Activated naive CD8-positive, alpha-beta T cell treated with anti-CD3 and anti-CD28 coated beads, Interleukin-2, amount 10 ng/mL, durations not matched to agents 7 days and 5 days (primary cell): ENCODE measurements at regions of chr12 and their contacts with region 1.

Region 1: DNA sequence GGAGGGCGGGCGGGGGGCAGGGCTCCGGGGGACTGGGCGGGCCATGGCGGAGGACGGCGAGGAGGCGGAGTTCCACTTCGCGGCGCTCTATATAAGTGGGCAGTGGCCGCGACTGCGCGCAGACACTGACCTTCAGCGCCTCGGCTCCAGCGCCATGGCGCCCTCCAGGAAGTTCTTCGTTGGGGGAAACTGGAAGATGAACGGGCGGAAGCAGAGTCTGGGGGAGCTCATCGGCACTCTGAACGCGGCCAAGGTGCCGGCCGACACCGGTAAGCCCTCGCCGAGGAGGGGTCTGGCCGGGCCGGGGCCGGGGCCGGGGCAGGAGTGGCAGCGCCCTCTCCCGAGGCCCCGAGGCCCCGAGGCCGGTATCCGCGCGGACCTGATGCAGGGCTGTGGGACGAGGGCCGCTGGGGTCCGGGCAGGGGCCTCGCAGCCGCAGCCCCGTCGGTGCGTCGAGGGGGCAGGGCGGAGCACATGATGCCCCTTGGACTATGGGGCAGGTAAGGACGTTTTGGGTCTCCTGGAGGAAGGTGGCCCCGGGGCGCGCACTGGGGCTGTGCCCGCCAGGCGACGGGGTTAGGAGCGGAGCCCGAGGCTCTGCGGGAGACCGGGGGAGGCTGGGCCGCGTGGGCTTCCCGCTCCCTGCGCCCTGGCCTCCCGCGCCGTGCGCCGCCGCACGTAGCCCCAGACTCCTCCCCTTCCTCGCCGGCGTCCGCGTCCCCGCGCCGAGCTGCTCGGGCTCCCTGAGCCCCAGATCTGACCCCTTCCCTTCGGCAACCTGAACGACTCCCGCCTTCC is at the start of gene TPI1:
- DNase-seq: peak; percentile 85
- ATAC-seq: peak; percentile 65
- H3K4me3 Mint-ChIP-seq: peak within 1 kb of the TSS; percentile 95
- H3K27ac Mint-ChIP-seq: peak within 1 kb of the TSS; percentile 96
- H3K4me1 Mint-ChIP-seq: peaks cover 39% of the 10 kb centered on the region
- H3K27me3 Mint-ChIP-seq: no peaks in the 10 kb centered on the region
- total RNA-seq, gene TPI1: 1,129 to 1,200 TPM

Region 2: DNA sequence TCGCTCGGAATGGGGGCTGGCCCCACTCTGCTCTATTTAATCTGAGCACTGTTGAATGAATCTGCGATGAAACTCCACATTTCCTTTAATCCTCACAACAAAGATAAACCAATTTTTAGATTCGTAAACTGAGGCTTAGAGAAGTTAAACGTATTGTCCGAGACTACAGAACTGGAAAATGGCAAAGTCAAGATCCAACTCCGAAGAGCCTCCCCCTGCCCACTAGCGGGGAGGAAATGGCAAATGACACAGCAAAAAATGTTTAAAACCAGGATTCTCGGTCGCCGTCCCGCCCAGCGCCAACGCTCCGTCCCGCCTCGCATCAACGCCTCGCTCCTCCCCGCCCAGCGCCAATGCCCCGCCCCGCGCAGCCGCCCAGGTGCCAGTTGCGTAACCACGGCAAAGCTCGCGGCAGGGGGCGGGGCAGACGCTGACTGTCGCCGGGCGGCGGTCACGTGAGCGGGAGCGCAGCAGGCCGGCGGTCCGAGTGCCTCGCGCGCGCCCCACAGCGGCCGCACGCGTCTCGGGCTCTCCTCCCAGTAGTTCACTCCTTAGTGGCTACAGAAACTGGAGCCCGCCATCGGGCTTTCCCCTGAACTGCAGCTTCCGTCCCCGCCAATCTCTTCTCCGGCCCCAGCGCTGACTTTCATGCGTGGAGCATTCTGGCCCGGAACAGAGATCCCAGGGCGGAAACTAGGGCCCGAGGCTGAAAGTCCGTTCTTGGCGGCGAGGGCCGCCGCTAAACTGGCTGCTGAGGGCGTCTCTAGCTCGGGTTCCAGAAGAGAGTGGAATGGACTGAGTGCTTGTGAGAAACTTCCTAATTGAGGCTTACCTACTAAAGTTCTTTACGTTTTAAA is 23.4 kb after region 1 on chr12:
- POLR2A ChIA-PET with region 1: interaction called, 78 read pairs
- DNase-seq: peak; percentile 100
- ATAC-seq: peak; percentile 97
- H3K4me3 Mint-ChIP-seq: peak overlapping the region; percentile 88
- H3K27ac Mint-ChIP-seq: peak overlapping the region; percentile 91
- H3K4me1 Mint-ChIP-seq: peaks cover 17% of the 10 kb centered on the region
- H3K27me3 Mint-ChIP-seq: no peaks in the 10 kb centered on the region

Region 3: GRCh38 chr12:6927379-6928024 is 59.9 kb after region 1 on chr12 and contains the start of gene ATN1:
- POLR2A ChIA-PET with region 1: interaction called, 10 read pairs
- DNase-seq: peak; percentile 68
- ATAC-seq: peak; percentile 23
- H3K4me3 Mint-ChIP-seq: peak within 1 kb of the TSS; percentile 82
- H3K27ac Mint-ChIP-seq: peak within 1 kb of the TSS; percentile 80
- H3K4me1 Mint-ChIP-seq: peaks cover 47% of the 10 kb centered on the region
- H3K27me3 Mint-ChIP-seq: no peaks in the 10 kb centered on the region
- total RNA-seq, gene ATN1: 31.0 to 31.3 TPM

Region 4: GRCh38 chr12:6953442-6954315 is 86.1 kb after region 1 on chr12:
- POLR2A ChIA-PET with region 1: interaction called, 25 read pairs
- DNase-seq: peak; percentile 78
- ATAC-seq: peak; percentile 23
- H3K4me3 Mint-ChIP-seq: peak overlapping the region; percentile 100
- H3K27ac Mint-ChIP-seq: peak overlapping the region; percentile 100
- H3K4me1 Mint-ChIP-seq: peaks cover 72% of the 10 kb centered on the region
- H3K27me3 Mint-ChIP-seq: no peaks in the 10 kb centered on the region

Region 5: GRCh38 chr12:7171854-7172253 is 304.2 kb after region 1 on chr12:
- POLR2A ChIA-PET with region 1: no interaction called
- DNase-seq: no peak
- ATAC-seq: no peak
- H3K4me3 Mint-ChIP-seq: no peak overlapping the region
- H3K27ac Mint-ChIP-seq: no peak overlapping the region
- H3K4me1 Mint-ChIP-seq: no peaks in the 10 kb centered on the region
- H3K27me3 Mint-ChIP-seq: peaks cover 27% of the 10 kb centered on the region